Activated CD4-positive, alpha-beta memory T cell treated with anti-CD3 and anti-CD28 coated beads, Interleukin-2, amount 10 ng/mL, durations not matched to agents 7 days and 5 days (primary cell): ENCODE measurements at regions of chr5 and their contacts with region 1.

Region 1: DNA sequence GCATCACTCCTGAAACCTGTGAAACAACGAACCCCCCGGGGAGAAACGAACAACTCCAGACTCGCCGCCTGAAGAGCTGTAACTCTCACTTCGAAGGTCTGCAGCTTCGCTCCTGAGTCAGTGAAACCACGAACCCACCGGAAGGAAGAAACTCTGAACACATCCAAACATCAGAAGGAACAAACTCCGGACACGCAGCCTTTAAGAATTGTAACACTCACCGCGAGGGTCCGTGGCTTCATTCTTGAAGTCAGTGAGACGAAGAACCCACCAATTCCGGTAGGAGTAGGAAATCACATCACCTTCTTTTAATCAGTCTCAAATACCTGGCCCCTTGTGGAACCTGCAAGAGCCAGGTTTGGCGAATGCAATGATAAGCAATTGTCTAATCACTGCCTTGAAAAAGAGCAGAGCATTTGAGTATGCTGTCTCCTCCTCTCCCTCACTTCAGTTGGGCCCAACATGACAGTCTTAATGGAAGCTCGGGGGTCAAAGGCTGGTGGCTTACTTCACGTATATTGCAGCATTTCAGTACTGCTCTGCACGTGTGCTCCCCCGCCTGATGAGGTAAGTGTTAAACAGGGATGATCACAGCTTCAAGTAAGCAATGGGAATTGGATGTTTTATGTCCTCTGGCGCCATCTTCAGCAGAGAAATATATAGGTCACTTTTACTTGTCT is 473 bp downstream of the IRGM start:
- DNase-seq: peak; percentile 70
- H3K4me3 Mint-ChIP-seq: peak overlapping the region; percentile 68
- H3K27ac Mint-ChIP-seq: peak overlapping the region; percentile 88
- H3K4me1 Mint-ChIP-seq: peaks cover 22% of the 10 kb centered on the region
- H3K27me3 Mint-ChIP-seq: peaks cover 6% of the 10 kb centered on the region

Region 2: GRCh38 chr5:150560401-150561193 is 286.2 kb before region 1 on chr5:
- CTCF ChIA-PET with region 1: interaction called, 47 read pairs
- POLR2A ChIA-PET with region 1: no interaction called
- DNase-seq: peak; percentile 84
- H3K4me3 Mint-ChIP-seq: no peak overlapping the region
- H3K27ac Mint-ChIP-seq: no peak overlapping the region
- H3K4me1 Mint-ChIP-seq: no peaks in the 10 kb centered on the region
- H3K27me3 Mint-ChIP-seq: peaks cover 4% of the 10 kb centered on the region

Region 3: DNA sequence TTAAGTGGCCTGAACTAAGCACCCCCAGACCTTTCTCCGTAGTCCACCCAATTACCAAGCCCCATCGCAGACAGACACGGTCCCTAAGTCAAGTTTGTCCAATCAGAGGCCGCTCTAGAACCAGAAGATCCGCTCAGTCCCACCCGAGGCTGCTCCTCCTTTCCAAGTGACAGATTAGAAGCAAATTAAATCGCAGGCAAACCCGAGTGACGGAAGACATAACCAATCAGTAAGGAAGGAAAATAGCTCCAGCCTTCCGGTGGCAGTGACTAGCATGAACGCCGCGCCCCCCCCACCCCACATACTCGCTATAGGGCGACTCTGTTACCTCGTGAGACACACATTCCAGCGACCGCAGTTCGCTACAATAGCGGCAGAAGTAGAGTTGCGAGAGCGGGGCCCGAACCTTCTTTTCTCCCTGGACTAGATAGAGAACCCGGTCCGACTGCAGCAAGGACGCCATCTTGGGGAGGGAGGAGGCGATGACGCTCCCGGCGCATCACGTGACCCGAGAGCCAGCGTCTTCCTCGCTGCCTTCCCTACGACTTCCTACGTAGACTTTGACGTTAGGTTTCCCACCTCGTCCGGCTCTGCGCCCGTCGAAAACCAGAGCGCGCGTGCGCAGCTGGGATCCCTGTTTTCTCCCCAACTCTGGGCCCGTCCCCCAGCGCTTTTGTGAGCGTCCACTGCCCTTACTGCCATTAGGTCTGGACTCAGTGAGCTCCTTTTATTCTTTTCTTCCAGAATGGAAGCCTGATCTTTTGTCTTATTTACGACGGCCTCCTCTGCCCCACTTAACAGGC is 88.1 kb before region 1 on chr5 and contains the start of gene DCTN4:
- CTCF ChIA-PET with region 1: interaction called, 16 read pairs
- POLR2A ChIA-PET with region 1: interaction called, 10 read pairs
- DNase-seq: peak; percentile 93
- H3K4me3 Mint-ChIP-seq: no peak within 1 kb of the TSS
- H3K27ac Mint-ChIP-seq: no peak within 1 kb of the TSS
- H3K4me1 Mint-ChIP-seq: peaks cover 37% of the 10 kb centered on the region
- H3K27me3 Mint-ChIP-seq: no peaks in the 10 kb centered on the region
- total RNA-seq, gene DCTN4: 38.6 to 40.6 TPM

Region 4: DNA sequence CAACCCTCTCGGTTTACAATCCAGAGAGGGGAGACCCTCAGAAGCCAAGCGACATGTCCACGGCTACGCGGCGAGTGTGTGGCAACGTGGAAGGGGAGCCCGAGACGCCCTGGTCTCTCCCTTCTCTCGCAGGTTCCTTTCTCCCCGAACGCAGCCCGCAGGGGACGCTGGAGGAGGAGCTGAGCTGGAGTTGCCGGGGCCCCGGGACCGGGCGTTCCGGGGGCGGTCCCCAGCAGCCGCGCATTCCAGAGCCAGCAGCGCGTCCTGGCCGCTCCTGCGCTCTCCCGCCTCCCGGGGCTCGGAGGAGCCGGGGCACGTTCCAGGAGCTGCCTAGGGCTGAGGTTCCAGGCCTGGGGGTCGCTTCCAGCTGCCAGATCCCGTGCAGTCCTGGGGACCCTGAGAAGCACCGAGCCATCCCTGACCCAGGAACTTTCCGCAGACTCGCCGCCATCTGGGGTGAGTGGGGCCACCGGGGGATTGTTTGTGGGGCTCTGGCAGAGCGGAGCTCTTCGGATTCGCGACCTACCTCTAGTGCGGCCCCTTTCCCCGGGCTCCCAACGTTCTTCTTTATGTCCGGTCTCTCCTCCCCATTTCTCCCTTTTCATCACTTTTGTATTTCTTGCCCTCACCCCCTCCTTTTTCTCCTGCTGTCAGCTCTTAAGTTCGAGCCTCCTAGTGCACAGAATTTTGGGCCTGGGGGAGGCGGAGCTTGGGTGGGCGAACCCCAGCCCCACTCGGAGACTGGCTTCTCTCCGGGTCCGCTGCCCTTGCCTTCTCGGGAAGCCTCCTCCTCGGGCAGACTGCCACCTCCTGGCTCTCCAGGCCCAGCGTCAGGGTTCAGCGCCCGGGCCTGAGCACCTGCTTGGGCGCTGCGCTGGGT is 68.0 kb before region 1 on chr5 and contains the start of gene SMIM3:
- CTCF ChIA-PET with region 1: interaction called, 75 read pairs
- POLR2A ChIA-PET with region 1: interaction called, 37 read pairs
- DNase-seq: peak; percentile 76
- H3K4me3 Mint-ChIP-seq: peak within 1 kb of the TSS; percentile 93
- H3K27ac Mint-ChIP-seq: peak within 1 kb of the TSS; percentile 89
- H3K4me1 Mint-ChIP-seq: peaks cover 61% of the 10 kb centered on the region
- H3K27me3 Mint-ChIP-seq: no peaks in the 10 kb centered on the region
- total RNA-seq, gene SMIM3: 17.4 to 19.1 TPM

Region 5: DNA sequence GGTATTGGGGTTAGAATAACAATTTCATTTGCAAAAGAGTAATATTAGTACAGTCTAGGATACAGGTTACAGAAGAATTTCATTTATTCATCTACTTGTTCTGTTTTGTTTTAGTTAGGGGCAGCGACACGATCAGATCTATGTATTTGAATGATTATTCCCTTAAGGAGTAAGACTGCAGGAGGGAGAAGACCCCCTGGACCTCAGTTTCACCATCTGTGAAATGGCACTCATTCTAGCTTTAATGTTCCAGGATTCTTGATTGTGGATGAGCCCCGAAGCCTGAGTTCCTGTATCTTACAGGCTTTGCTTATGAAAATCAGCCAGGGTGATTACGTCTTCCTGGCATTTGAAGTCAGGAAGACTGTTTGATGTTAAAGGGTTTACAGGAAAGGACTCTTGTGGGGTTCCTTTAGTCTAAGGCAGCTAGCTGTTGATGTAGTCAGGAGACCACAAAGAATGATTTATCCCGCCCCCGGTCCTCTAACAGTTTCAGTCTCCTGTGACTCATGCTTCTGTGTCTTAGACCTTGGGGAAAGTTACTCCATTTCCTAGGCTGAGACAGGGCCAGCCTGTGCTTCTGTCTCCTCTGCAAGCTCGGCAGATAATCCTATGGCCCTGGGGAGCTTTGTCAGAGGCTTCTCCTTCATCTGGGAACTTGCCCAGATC is 56.7 kb before region 1 on chr5:
- CTCF ChIA-PET with region 1: interaction called, 6 read pairs
- POLR2A ChIA-PET with region 1: interaction called, 14 read pairs
- DNase-seq: peak; percentile 70
- H3K4me3 Mint-ChIP-seq: peak overlapping the region; percentile 40
- H3K27ac Mint-ChIP-seq: peak overlapping the region; percentile 71
- H3K4me1 Mint-ChIP-seq: peaks cover 45% of the 10 kb centered on the region
- H3K27me3 Mint-ChIP-seq: no peaks in the 10 kb centered on the region

Region 6: DNA sequence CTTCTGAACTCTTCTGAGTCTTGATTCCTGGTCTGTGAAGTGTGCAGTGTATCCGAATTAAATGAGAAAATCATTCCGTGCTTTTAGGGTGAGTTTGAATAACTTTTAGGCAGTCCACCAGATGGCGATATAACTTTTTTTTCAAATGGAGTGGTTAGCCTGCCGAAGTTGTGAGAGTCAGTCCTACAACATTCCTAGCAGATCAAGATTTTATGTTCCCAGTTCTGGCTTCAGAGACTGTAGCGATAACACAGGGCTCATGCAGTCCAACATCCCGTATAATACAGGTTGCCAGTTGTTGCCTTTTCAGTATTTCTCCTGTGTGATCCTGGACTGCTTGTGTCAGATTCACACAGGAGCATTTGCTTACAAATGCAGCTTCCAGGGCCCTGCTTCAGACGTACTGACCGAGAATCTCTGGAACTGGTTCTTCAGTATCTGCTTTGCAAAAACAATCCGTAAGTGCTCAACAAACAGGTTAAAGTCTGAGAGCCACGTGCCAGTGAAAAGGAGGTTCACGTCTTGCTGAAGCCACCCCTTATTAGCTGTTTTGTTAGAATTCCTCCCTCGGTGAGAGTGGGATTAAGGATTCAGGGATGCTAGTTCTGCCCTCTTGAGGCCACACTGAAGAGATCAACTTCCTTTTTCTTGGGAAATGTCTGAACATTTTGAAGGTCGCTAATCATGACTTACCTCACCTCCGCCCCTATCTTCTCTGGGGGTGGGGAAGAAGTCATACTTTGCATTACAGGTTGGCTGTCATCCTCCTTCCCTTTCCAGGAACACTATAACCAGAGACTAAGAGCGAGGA is 45.5 kb before region 1 on chr5:
- CTCF ChIA-PET with region 1: interaction called, 10 read pairs
- POLR2A ChIA-PET with region 1: interaction called, 5 read pairs
- DNase-seq: peak; percentile 16
- H3K4me3 Mint-ChIP-seq: no peak overlapping the region
- H3K27ac Mint-ChIP-seq: no peak overlapping the region
- H3K4me1 Mint-ChIP-seq: peaks cover 4% of the 10 kb centered on the region
- H3K27me3 Mint-ChIP-seq: peaks cover 3% of the 10 kb centered on the region

Region 7: GRCh38 chr5:150862070-150862469 is 15.3 kb after region 1 on chr5:
- CTCF ChIA-PET with region 1: no interaction called
- POLR2A ChIA-PET with region 1: no interaction called
- DNase-seq: no peak
- H3K4me3 Mint-ChIP-seq: no peak overlapping the region
- H3K27ac Mint-ChIP-seq: no peak overlapping the region
- H3K4me1 Mint-ChIP-seq: no peaks in the 10 kb centered on the region
- H3K27me3 Mint-ChIP-seq: no peaks in the 10 kb centered on the region

Region 8: GRCh38 chr5:150912312-150912814 is 65.6 kb after region 1 on chr5:
- CTCF ChIA-PET with region 1: no interaction called
- POLR2A ChIA-PET with region 1: no interaction called
- DNase-seq: no peak
- H3K4me3 Mint-ChIP-seq: no peak overlapping the region
- H3K27ac Mint-ChIP-seq: no peak overlapping the region
- H3K4me1 Mint-ChIP-seq: no peaks in the 10 kb centered on the region
- H3K27me3 Mint-ChIP-seq: no peaks in the 10 kb centered on the region